ENCODE measurements at regions of chr1 and their contacts with region 1.

Region 1: DNA sequence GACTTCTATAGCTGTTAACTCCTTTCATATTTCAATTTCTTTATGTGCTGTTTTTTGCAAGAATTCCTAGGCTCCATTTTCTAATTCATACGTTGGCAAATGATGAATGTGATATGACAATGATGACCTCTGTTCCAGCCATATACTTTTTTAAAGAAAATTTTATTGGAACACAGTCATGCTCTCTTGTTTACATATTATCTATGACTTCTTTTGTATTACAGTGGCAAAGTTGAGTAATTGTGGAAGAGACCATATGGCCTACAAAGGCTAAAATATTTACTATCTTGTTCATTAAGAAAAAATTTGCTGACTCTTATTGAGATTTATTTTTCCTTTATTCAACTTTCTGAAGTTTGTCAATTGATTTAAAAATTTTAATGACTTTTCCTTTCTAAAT is 7.1 kb downstream of the IFI44L start:
- DNase-seq: no peak
- ATAC-seq: no peak
- H3K4me3 ChIP-seq: peak overlapping the region; percentile 63
- H3K27ac ChIP-seq: no peak overlapping the region
- H3K4me1 ChIP-seq: peaks cover 8% of the 10 kb centered on the region; the same call in 1 of the 2 replicates
- H3K27me3 ChIP-seq: no peaks in the 10 kb centered on the region
- CTCF ChIP-seq: no peak
- EP300 ChIP-seq: no peak
- POLR2A ChIP-seq: no peak
- RAD21 ChIP-seq: no peak

Region 2: GRCh38 chr1:77671836-77672235 is 955.5 kb before region 1 on chr1:
- CTCF ChIA-PET with region 1: no interaction called
- POLR2A ChIA-PET with region 1: no interaction called
- RAD21 ChIA-PET with region 1: no interaction called
- SMC1A ChIA-PET with region 1: no interaction called
- in situ Hi-C with region 1: no loop called
- intact Hi-C with region 1: loop called (anchors 5 kb)
- DNase-seq: no peak
- ATAC-seq: peak; percentile 61
- H3K4me3 ChIP-seq: peak overlapping the region; percentile 60
- H3K27ac ChIP-seq: peak overlapping the region; percentile 82
- H3K4me1 ChIP-seq: peaks cover 25% of the 10 kb centered on the region
- H3K27me3 ChIP-seq: no peaks in the 10 kb centered on the region
- CTCF ChIP-seq: no peak
- EP300 ChIP-seq: no peak
- POLR2A ChIP-seq: no peak
- RAD21 ChIP-seq: no peak

Region 3: GRCh38 chr1:78607334-78607927 is 19.9 kb before region 1 on chr1:
- CTCF ChIA-PET with region 1: no interaction called
- POLR2A ChIA-PET with region 1: no interaction called
- RAD21 ChIA-PET with region 1: no interaction called
- SMC1A ChIA-PET with region 1: no interaction called
- in situ Hi-C with region 1: no loop called
- intact Hi-C with region 1: no loop called
- DNase-seq: no peak
- ATAC-seq: peak; percentile 61
- H3K4me3 ChIP-seq: no peak overlapping the region
- H3K27ac ChIP-seq: no peak overlapping the region
- H3K4me1 ChIP-seq: no peaks in the 10 kb centered on the region
- H3K27me3 ChIP-seq: no peaks in the 10 kb centered on the region
- CTCF ChIP-seq: peak; percentile 30 to 51 (median 31); a peak in 4 of 6 replicates
- EP300 ChIP-seq: no peak
- POLR2A ChIP-seq: no peak
- RAD21 ChIP-seq: peak; percentile 62

Region 4: DNA sequence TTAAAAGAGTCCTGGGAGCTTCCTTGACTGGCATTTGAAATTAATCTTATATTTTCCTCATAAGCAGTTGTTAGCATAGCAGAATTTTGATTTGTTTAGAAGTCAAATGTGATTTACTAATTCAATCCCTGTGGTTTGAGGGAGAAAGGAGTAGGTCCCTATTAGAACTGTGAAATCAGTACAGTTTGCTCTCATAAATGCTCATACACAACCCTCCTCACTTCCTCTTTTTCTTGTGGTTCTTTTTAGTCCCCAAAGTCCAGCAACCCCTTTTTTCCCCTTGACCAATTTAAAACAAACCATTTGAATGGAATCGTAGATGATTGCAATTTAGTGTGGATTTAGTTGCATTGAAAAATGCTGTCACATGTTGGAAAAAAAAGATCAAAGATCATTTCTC is 13.1 kb after region 1 on chr1:
- CTCF ChIA-PET with region 1: interaction called, 7 read pairs
- POLR2A ChIA-PET with region 1: interaction called, 12 read pairs
- RAD21 ChIA-PET with region 1: interaction called, 3 read pairs
- SMC1A ChIA-PET with region 1: interaction called, 19 read pairs
- in situ Hi-C with region 1: no loop called
- intact Hi-C with region 1: no loop called
- DNase-seq: no peak
- ATAC-seq: peak; percentile 81
- H3K4me3 ChIP-seq: no peak overlapping the region
- H3K27ac ChIP-seq: no peak overlapping the region
- H3K4me1 ChIP-seq: peaks cover 22% of the 10 kb centered on the region
- H3K27me3 ChIP-seq: no peaks in the 10 kb centered on the region
- CTCF ChIP-seq: no peak
- EP300 ChIP-seq: peak in 1 of 2 experiments; percentile 72; a peak in 1 of 4 replicates
- POLR2A ChIP-seq: no peak
- RAD21 ChIP-seq: no peak

Region 5: GRCh38 chr1:78649628-78650027 is 22.3 kb after region 1 on chr1 and contains the start of gene IFI44:
- CTCF ChIA-PET with region 1: interaction called, 9 read pairs
- POLR2A ChIA-PET with region 1: interaction called, 32 read pairs
- RAD21 ChIA-PET with region 1: interaction called, 18 read pairs
- SMC1A ChIA-PET with region 1: interaction called, 22 read pairs
- in situ Hi-C with region 1: no loop called
- intact Hi-C with region 1: loop called (anchors 1 kb)
- DNase-seq: peak; percentile 75
- ATAC-seq: peak; percentile 72
- H3K4me3 ChIP-seq: peak within 1 kb of the TSS; percentile 95
- H3K27ac ChIP-seq: peak within 1 kb of the TSS; percentile 82
- H3K4me1 ChIP-seq: no peaks in the 10 kb centered on the region
- H3K27me3 ChIP-seq: no peaks in the 10 kb centered on the region
- CTCF ChIP-seq: no peak
- EP300 ChIP-seq: no peak
- POLR2A ChIP-seq: peak; percentile 81
- RAD21 ChIP-seq: no peak
- polyA plus RNA-seq, gene IFI44: 75.6 to 125 TPM